ENCODE measurements at regions of chr21 and their contacts with region 1.

Region 1: GRCh38 chr21:29073222-29074006 is at the start of gene CCT8:
- DNase-seq: peak; percentile 93
- ATAC-seq: peak; percentile 90
- H3K4me3 Mint-ChIP-seq: peak within 1 kb of the TSS; percentile 98
- H3K27ac Mint-ChIP-seq: peak within 1 kb of the TSS; percentile 98
- H3K4me1 Mint-ChIP-seq: peaks cover 55% of the 10 kb centered on the region
- H3K27me3 Mint-ChIP-seq: no peaks in the 10 kb centered on the region
- CTCF ChIP-seq: no peak
- total RNA-seq, gene CCT8: 170 and 179 TPM in 2 replicates

Region 2: DNA sequence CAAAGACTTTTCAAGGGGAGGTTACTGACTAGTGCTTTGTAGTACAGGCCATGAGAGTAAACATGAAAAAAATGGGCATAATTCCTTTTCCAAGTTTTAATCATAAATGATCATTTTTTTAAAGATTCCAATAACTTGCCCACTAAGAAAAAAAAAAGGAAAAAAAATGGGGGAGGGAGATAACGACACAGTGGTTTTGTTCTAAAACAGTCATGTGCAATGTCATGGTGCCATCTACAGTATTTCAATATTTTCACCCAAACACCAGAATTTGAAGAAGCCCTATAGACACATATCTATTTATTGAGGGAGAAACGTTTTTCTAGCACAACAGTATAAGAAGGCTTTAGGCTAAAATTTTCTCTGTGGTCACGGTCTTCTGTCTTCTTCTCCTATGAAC is 330.9 kb before region 1 on chr21:
- CTCF ChIA-PET with region 1: no interaction called
- POLR2A ChIA-PET with region 1: no interaction called
- intact Hi-C with region 1: no loop called
- DNase-seq: no peak
- ATAC-seq: no peak
- H3K4me3 Mint-ChIP-seq: no peak overlapping the region
- H3K27ac Mint-ChIP-seq: no peak overlapping the region
- H3K4me1 Mint-ChIP-seq: no peaks in the 10 kb centered on the region
- H3K27me3 Mint-ChIP-seq: no peaks in the 10 kb centered on the region
- CTCF ChIP-seq: no peak

Region 3: GRCh38 chr21:28884976-28885852 is 188.2 kb before region 1 on chr21:
- CTCF ChIA-PET with region 1: no interaction called
- POLR2A ChIA-PET with region 1: interaction called, 4 read pairs
- intact Hi-C with region 1: loop called (anchors 1 kb)
- DNase-seq: peak; percentile 88
- ATAC-seq: peak; percentile 95
- H3K4me3 Mint-ChIP-seq: peak overlapping the region; percentile 88
- H3K27ac Mint-ChIP-seq: peak overlapping the region; percentile 93
- H3K4me1 Mint-ChIP-seq: peaks cover 20% of the 10 kb centered on the region
- H3K27me3 Mint-ChIP-seq: peaks cover 7% of the 10 kb centered on the region
- CTCF ChIP-seq: no peak

Region 4: GRCh38 chr21:29002442-29003144 is 70.8 kb before region 1 on chr21:
- CTCF ChIA-PET with region 1: no interaction called
- POLR2A ChIA-PET with region 1: interaction called, 29 read pairs
- intact Hi-C with region 1: loop called (anchors 1 kb)
- DNase-seq: peak; percentile 90
- ATAC-seq: peak; percentile 100
- H3K4me3 Mint-ChIP-seq: peak overlapping the region; percentile 90
- H3K27ac Mint-ChIP-seq: peak overlapping the region; percentile 95
- H3K4me1 Mint-ChIP-seq: peaks cover 12% of the 10 kb centered on the region
- H3K27me3 Mint-ChIP-seq: no peaks in the 10 kb centered on the region
- CTCF ChIP-seq: no peak

Region 5: GRCh38 chr21:29024474-29025327 is 48.7 kb before region 1 on chr21 and contains the start of gene USP16:
- CTCF ChIA-PET with region 1: no interaction called
- POLR2A ChIA-PET with region 1: interaction called, 47 read pairs
- intact Hi-C with region 1: loop called (anchors 1 kb)
- DNase-seq: peak; percentile 94
- ATAC-seq: peak; percentile 93
- H3K4me3 Mint-ChIP-seq: peak within 1 kb of the TSS; percentile 98
- H3K27ac Mint-ChIP-seq: peak within 1 kb of the TSS; percentile 98
- H3K4me1 Mint-ChIP-seq: peaks cover 45% of the 10 kb centered on the region
- H3K27me3 Mint-ChIP-seq: no peaks in the 10 kb centered on the region
- CTCF ChIP-seq: no peak
- total RNA-seq, gene USP16: 53.2 and 54.6 TPM in 2 replicates

Region 6: DNA sequence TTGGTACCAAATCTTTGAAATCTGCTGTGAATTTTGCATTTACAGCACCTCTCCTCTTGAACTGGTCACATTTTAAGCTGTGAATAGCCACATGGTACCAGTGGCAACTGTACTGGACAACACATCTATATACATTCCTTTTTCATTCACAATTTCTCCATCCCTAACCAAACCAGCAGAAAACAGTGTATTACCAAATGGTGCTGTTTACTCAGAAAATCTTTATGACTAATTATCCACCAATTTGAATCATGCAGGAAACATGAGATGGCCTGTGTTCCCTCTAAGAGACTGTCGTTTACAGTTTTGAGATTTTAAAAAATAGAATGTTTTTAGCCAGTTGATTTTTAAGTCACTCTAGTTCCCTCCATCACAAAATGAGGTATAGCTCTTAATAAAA is 17.6 kb after region 1 on chr21:
- CTCF ChIA-PET with region 1: interaction called, 3 read pairs
- POLR2A ChIA-PET with region 1: interaction called, 17 read pairs
- intact Hi-C with region 1: no loop called
- DNase-seq: no peak
- ATAC-seq: no peak
- H3K4me3 Mint-ChIP-seq: no peak overlapping the region
- H3K27ac Mint-ChIP-seq: no peak overlapping the region
- H3K4me1 Mint-ChIP-seq: no peaks in the 10 kb centered on the region
- H3K27me3 Mint-ChIP-seq: no peaks in the 10 kb centered on the region
- CTCF ChIP-seq: no peak

Region 7: GRCh38 chr21:29125191-29125590 is 51.8 kb after region 1 on chr21:
- CTCF ChIA-PET with region 1: interaction called, 3 read pairs
- POLR2A ChIA-PET with region 1: interaction called, 4 read pairs
- intact Hi-C with region 1: loop called (anchors 2 kb)
- DNase-seq: no peak
- ATAC-seq: peak; percentile 83
- H3K4me3 Mint-ChIP-seq: no peak overlapping the region
- H3K27ac Mint-ChIP-seq: peak overlapping the region; percentile 69
- H3K4me1 Mint-ChIP-seq: peaks cover 42% of the 10 kb centered on the region
- H3K27me3 Mint-ChIP-seq: no peaks in the 10 kb centered on the region
- CTCF ChIP-seq: no peak

Region 8: GRCh38 chr21:29343519-29343918 is 270.1 kb after region 1 on chr21:
- CTCF ChIA-PET with region 1: no interaction called
- POLR2A ChIA-PET with region 1: no interaction called
- intact Hi-C with region 1: loop called (anchors 1 kb)
- DNase-seq: no peak
- ATAC-seq: no peak
- H3K4me3 Mint-ChIP-seq: no peak overlapping the region
- H3K27ac Mint-ChIP-seq: no peak overlapping the region
- H3K4me1 Mint-ChIP-seq: peaks cover 36% of the 10 kb centered on the region
- H3K27me3 Mint-ChIP-seq: no peaks in the 10 kb centered on the region
- CTCF ChIP-seq: no peak